PC-3 (cell line): ENCODE measurements at regions of chr20 and their contacts with region 1.

Region 1: GRCh38 chr20:32387252-32387651 is 29.1 kb downstream of the ASXL1 start:
- DNase-seq: no peak
- ATAC-seq: no peak
- H3K4me3 ChIP-seq: no peak overlapping the region
- H3K27ac ChIP-seq: no peak overlapping the region
- H3K4me1 ChIP-seq: peaks cover 5% of the 10 kb centered on the region; the same call in 1 of the 2 replicates
- H3K27me3 ChIP-seq: no peaks in the 10 kb centered on the region
- CTCF ChIP-seq: no peak

Region 2: GRCh38 chr20:32711346-32711745 is 324.1 kb after region 1 on chr20:
- CTCF ChIA-PET with region 1: no interaction called
- POLR2A ChIA-PET with region 1: interaction called, 23 read pairs
- intact Hi-C with region 1: no loop called
- DNase-seq: no peak
- ATAC-seq: no peak
- H3K4me3 ChIP-seq: no peak overlapping the region
- H3K27ac ChIP-seq: no peak overlapping the region
- H3K4me1 ChIP-seq: peaks cover 9% of the 10 kb centered on the region; the same call in 1 of the 2 replicates
- H3K27me3 ChIP-seq: no peaks in the 10 kb centered on the region
- CTCF ChIP-seq: no peak